ENCODE measurements at regions of chr1 and their contacts with region 1.

Region 1: GRCh38 chr1:52842643-52843309 is at the start of gene ZYG11A:
- DNase-seq: peak; percentile 71
- H3K4me3 ChIP-seq: peak within 1 kb of the TSS; percentile 38 to 55 (median 38)
- H3K27ac ChIP-seq: no peak within 1 kb of the TSS
- H3K4me1 ChIP-seq: peaks cover 9% of the 10 kb centered on the region
- H3K27me3 ChIP-seq: peaks cover 12% of the 10 kb centered on the region
- CTCF ChIP-seq: peak in 1 of 2 donors; percentile 34
- total RNA-seq, gene ZYG11A: 0.47 to 0.67 TPM

Region 2: DNA sequence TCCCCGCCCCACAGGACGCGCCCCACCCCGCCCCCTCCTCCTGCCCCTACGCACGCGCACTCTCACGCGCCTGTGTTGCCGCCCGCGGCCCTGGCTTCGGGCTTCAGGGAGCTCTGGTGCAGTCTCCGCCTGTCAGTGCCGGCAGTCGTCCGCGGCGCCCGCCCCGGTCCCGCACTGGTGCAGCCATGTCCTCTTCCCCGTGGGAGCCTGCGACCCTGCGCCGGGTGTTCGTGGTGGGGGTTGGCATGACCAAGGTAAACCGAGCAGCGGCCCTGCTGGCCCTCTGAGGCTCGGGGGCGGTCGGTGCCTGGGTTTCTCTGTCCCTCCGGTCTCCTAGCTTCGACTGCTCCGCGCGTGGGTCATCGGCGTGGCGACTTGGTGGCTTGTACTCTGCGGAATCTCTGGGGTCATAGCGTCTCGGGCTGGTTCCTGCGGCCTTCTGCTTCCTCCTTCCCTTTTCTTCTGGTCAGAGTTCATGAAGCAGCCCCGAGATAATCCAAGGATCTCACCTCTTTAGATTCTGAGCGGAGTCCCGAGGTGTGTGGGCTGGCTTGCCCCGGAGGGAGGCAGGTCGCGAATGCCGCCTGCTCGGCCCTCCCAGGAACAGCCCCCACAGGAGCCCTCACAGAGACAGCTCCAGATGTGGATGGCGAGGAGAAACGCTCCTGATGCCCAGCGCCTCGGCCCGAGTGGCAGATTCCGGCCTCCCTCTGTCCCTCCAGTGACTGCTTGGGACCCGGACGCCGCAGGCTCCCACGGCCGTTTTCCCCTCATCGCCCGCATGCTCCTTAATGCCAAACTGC is 84.6 kb after region 1 on chr1 and contains the start of gene SCP2:
- CTCF ChIA-PET with region 1: no interaction called
- dilution Hi-C with region 1: no loop called
- in situ Hi-C with region 1: no loop called
- intact Hi-C with region 1: loop called (anchors 10 kb)
- DNase-seq: peak; percentile 65
- H3K4me3 ChIP-seq: peak within 1 kb of the TSS; percentile 82 to 87 (median 85)
- H3K27ac ChIP-seq: peak within 1 kb of the TSS; percentile 47
- H3K4me1 ChIP-seq: peaks cover 3% of the 10 kb centered on the region
- H3K27me3 ChIP-seq: no peaks in the 10 kb centered on the region
- CTCF ChIP-seq: no peak
- total RNA-seq, gene SCP2: 80.0 to 105 TPM

Region 3: GRCh38 chr1:53188099-53188498 is 345.3 kb after region 1 on chr1:
- CTCF ChIA-PET with region 1: no interaction called
- dilution Hi-C with region 1: no loop called
- in situ Hi-C with region 1: no loop called
- intact Hi-C with region 1: loop called (anchors 5 kb)
- DNase-seq: peak; percentile 38
- H3K4me3 ChIP-seq: no peak overlapping the region
- H3K27ac ChIP-seq: no peak overlapping the region
- H3K4me1 ChIP-seq: peaks cover 15% of the 10 kb centered on the region
- H3K27me3 ChIP-seq: no peaks in the 10 kb centered on the region
- CTCF ChIP-seq: no peak

Measured in mammary epithelial cell (primary cell).